Left colon (tissue), 2 donors: ENCODE measurements at regions of chr1 and their contacts with region 1.

Region 1: GRCh38 chr1:226827968-226828513 is 42.4 kb upstream of the PSEN2 start:
- DNase-seq: peak; percentile 95 to 96
- ATAC-seq: peak; percentile 100

Region 2: DNA sequence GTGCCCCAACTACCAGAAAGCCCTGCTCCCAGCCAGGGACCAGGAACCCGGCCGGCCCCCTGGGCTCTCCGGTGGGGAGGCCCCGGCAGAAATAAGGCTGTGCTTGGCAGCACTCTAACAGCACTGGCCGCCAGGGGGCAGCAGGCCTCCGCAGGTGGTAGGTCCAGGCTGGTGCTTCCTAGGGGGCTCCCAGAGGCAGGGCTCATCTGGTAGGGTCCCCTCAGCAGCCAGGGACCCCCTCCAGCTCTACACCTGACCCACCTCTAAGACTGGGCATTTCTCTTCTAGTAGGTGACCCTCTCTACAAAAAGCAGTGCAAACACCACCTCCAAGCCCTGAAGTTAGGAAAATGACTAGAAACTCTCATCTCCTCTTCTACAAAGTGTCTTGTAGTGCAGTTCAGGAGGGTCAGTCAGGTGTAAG is 193.9 kb before region 1 on chr1:
- intact Hi-C with region 1: loop called (anchors 5 kb)
- DNase-seq: peak; percentile 66 to 91
- ATAC-seq: peak; percentile 82

Region 3: GRCh38 chr1:226736908-226737818 is 90.9 kb before region 1 on chr1:
- intact Hi-C with region 1: loop called in 1 of 2 experiments (anchors 10 kb)
- DNase-seq: peak in 1 of 2 donors; percentile 66
- ATAC-seq: peak; percentile 44

Region 4: DNA sequence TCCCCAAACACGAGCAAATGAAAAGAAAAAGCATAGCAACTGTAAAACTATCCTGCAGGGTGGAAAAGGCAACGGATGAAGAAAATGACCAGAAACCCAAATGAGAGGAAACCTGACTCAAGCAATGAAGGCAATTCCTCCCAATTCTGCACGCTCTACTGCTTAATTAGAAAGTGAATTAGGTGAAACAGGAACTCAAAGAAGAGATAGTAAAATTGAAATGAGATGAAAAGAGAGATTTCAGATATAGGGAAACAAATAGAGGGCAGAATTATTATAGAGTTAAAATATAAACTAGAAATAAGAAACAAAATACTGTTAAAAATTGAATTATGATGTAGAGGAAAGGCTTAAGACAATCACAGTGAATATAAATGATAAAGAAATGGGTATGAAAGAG is 61.5 kb before region 1 on chr1:
- intact Hi-C with region 1: no loop called
- DNase-seq: no peak
- ATAC-seq: no peak

Region 5: DNA sequence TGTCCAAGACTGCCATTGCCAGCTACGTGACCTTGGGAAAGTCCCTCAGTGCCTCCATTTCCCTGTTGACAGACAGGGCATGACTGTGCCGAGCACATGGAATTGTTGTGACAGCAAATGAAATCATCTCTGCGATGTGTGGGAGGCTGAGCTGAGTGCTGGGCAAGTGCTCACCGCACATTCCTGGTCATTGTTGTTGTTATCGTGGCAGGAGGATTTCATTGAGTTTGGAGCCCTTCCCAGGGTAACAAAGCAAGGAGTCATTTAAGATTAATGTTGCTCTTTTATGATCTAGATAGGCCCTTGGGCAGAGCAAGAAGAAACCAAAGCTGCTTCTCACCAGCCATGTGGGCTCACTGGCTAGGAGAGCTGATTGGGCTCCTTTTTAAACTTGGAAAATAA is 49.4 kb before region 1 on chr1:
- intact Hi-C with region 1: no loop called
- DNase-seq: peak; percentile 18 to 71
- ATAC-seq: peak; percentile 77

Region 6: DNA sequence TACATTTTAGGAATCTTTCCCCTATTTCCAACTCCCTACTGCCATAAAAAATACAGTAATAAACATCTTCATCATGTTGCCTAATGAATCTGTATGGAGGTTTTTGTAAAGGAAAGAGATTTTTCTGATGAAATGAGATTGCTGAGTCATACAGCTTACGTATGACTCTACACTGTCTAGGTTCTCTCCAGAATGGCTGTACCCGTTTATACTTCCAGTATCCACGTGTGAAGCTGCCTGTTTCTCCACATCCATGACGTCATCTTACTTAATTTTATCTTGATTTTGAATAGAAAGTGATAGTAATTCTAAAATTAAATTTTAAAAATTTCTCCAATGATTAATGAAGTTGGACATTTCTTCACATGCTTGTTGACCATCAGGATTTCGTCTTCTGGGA is 215.7 kb after region 1 on chr1:
- intact Hi-C with region 1: no loop called
- DNase-seq: no peak
- ATAC-seq: no peak